Mammary epithelial cell (primary cell): ENCODE measurements at regions of chr20 and their contacts with region 1.

Region 1: DNA sequence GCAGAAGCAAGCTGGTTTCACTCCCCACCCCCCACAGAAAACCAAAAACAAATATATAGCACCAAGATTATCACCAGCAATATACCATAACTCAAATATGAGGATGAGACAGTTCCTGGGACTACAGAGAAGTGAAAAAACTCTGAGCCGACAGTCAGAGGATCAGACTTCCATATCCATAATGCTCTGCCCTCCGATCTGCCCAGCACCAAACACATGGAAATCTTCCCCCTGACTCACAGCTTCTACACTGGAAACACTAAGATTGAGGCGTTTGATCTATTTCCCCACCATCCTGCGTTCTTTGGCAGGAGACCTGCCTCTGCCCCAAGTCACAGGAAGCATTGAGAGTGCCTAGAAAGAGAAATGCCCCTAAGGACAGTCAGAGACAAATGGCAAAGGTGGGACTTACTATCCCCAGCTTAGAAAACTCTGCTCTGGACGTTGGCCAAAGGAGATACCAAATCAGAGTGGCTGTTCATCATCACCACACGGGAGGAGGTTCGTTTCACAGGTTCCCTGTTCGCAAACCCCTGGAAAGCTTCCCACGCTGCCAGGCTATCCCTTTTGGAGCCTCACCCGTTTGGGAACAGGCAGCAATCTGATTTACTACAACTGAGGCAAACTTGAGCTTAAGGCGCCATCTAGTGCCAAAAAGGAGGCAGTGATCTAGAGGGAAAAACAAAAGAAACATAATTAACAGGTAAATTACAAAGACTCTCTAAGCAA is 48.7 kb upstream of the SRSF6 start:
- DNase-seq: peak; percentile 24
- H3K4me3 ChIP-seq: no peak overlapping the region
- H3K27ac ChIP-seq: no peak overlapping the region
- H3K4me1 ChIP-seq: no peaks in the 10 kb centered on the region
- H3K27me3 ChIP-seq: no peaks in the 10 kb centered on the region
- CTCF ChIP-seq: peak; percentile 70 to 74

Region 2: DNA sequence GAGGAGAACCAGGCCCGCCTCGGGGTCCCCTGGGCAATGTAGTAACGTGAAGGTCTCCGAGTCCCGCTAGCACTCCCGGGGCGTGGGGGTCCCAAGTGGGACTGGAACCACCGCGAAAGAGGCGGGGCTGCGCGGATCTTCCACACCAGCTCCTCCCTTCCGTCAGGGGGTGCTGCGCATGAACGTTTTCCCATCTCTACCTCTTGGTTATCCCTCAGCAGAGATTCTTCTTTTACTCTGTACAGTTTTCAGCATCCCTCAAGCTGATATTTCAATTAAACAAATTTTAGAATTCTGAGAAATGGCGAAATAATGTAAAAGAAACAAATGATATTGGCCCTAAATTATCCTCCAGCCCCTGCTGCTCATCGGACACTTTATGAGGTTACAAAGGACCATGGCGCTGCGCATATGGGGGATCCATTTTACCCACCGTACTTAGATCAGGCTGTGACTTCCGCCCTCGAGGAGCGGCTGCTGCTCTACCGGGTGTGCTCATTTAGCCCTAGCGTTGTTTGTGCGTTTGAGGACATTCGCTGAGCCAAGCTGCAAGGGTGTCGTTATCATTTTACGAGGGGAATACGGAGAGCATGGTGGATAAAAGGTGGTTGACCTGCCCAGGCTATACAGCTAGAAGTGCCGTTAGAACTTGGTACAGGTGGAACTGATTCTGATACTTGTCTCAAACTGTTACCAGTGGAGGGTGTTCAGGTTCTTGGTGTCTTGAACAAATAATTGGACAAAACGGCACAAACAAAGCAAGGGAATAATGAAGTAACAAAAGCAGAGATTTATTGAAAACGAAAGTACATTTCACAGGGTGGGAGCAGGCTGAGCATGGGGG is 1715.7 kb before region 1 on chr20:
- CTCF ChIA-PET with region 1: interaction called, 3 read pairs
- dilution Hi-C with region 1: no loop called
- in situ Hi-C with region 1: no loop called
- intact Hi-C with region 1: loop called (anchors 1 kb)
- DNase-seq: peak; percentile 73
- H3K4me3 ChIP-seq: peak overlapping the region; percentile 75 to 82 (median 76)
- H3K27ac ChIP-seq: peak overlapping the region; percentile 20
- H3K4me1 ChIP-seq: no peaks in the 10 kb centered on the region
- H3K27me3 ChIP-seq: no peaks in the 10 kb centered on the region
- CTCF ChIP-seq: peak; percentile 13 to 48

Region 3: GRCh38 chr20:41738604-41739206 is 1670.3 kb before region 1 on chr20:
- CTCF ChIA-PET with region 1: no interaction called
- dilution Hi-C with region 1: no loop called
- in situ Hi-C with region 1: loop called (anchors 25 kb)
- intact Hi-C with region 1: loop called (anchors 1 kb)
- DNase-seq: peak; percentile 11
- H3K4me3 ChIP-seq: no peak overlapping the region
- H3K27ac ChIP-seq: no peak overlapping the region
- H3K4me1 ChIP-seq: no peaks in the 10 kb centered on the region
- H3K27me3 ChIP-seq: no peaks in the 10 kb centered on the region
- CTCF ChIP-seq: peak; percentile 80 to 93

Region 4: DNA sequence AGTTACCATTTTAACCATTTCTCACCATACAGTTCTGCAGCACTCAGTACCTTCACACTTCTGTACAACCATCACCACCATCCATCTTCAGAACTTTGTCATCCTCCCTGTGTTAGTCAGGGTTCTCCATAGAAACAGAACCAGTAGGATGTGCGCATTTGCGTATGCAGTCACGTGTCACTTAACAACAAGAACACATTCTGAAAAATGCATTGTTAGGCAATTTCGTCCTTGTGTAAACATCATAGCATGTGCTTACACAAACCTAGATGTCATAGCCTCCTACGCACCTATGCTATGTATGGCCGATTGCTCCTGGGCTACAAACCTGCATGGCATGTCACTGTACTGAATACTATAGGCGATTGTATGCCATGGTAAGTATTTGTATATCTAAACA is 153.2 kb before region 1 on chr20:
- CTCF ChIA-PET with region 1: no interaction called
- dilution Hi-C with region 1: no loop called
- in situ Hi-C with region 1: no loop called
- intact Hi-C with region 1: no loop called
- DNase-seq: no peak
- H3K4me3 ChIP-seq: no peak overlapping the region
- H3K27ac ChIP-seq: no peak overlapping the region
- H3K4me1 ChIP-seq: no peaks in the 10 kb centered on the region
- H3K27me3 ChIP-seq: no peaks in the 10 kb centered on the region
- CTCF ChIP-seq: no peak

Region 5: DNA sequence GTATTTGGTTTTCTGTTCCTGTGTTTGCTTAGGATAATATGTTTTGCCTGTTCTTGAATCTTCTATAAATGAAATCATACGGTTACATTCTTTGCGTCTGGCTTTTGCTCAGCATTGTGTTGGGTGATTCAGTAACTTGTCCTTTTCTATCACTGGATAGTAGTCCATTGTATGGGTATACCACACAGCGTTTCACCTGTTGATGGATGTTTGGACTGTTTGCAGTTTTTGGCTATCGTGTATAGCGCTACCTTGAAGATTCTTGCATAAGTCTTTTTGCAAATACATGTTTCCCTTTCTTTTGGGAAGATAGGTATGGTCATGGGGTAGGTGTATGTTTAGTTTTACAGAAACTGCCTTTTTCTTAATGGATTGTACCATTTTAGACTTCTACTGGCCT is 267.4 kb after region 1 on chr20:
- CTCF ChIA-PET with region 1: no interaction called
- dilution Hi-C with region 1: no loop called
- in situ Hi-C with region 1: no loop called
- intact Hi-C with region 1: no loop called
- DNase-seq: no peak
- H3K4me3 ChIP-seq: no peak overlapping the region
- H3K27ac ChIP-seq: no peak overlapping the region
- H3K4me1 ChIP-seq: no peaks in the 10 kb centered on the region
- H3K27me3 ChIP-seq: no peaks in the 10 kb centered on the region
- CTCF ChIP-seq: no peak